ENCODE measurements at regions of chr1 and their contacts with region 1.

Region 1: DNA sequence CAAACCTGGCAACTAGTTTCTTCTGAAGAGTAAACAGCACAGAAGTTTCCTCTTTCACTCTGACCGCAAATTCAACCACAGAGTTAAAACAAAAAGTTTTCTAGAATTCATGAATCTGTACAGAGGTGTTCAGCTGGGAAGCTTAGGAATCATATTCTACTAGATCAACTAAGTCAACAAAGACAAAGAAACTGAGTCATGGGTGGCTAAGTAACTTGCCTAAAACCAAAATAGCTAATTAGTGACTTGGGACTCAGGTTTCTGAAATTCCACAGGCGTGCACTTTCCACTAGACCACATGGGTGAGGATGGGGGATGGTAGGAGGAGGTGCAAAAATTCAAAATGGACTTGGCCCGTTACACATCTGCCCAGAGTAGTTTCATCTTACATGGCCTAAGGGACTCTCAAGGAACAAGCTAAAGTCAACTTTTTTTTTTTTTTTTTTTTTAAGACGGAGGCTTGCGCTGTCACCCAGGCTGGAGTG is 25.8 kb downstream of the PTPN14 start:
- DNase-seq: peak; percentile 77 to 96
- H3K4me3 ChIP-seq: peak overlapping the region; percentile 4; the same call in 1 of the 2 replicates
- H3K27ac ChIP-seq: peak overlapping the region; percentile 43
- H3K4me1 ChIP-seq: peaks cover 37% of the 10 kb centered on the region
- H3K27me3 ChIP-seq: no peaks in the 10 kb centered on the region
- CTCF ChIP-seq: no peak

Region 2: DNA sequence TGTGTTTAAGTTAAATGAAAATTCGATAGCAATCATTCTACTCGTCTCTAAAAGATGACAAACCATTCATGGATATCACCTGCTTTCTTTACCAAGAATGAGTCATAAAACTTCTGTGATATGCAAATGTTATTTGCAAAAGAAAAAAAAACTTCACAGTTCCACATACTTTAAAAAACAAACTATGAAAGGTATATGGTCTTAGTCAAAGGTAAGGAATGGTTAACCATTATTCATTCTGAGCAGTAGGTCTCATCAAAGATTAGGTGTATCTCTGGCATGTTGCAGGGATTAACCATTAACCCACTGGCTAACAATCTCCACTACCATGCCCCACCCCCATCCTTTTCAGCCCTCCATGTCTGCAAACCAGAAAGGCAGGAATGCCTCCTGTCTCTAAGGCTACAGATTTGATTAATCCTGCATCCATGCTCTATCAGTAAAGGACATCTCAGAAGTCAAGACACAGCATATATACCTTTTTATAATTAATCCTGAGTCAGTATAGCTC is 18.6 kb before region 1 on chr1:
- CTCF ChIA-PET with region 1: no interaction called
- POLR2A ChIA-PET with region 1: no interaction called
- intact Hi-C with region 1: loop called (anchors 1 kb)
- DNase-seq: peak; percentile 75 to 97
- H3K4me3 ChIP-seq: peak overlapping the region; percentile 6; the same call in 1 of the 2 replicates
- H3K27ac ChIP-seq: peak overlapping the region; percentile 13; the same call in 1 of the 2 replicates
- H3K4me1 ChIP-seq: peaks cover 47% of the 10 kb centered on the region
- H3K27me3 ChIP-seq: no peaks in the 10 kb centered on the region
- CTCF ChIP-seq: no peak

Region 3: DNA sequence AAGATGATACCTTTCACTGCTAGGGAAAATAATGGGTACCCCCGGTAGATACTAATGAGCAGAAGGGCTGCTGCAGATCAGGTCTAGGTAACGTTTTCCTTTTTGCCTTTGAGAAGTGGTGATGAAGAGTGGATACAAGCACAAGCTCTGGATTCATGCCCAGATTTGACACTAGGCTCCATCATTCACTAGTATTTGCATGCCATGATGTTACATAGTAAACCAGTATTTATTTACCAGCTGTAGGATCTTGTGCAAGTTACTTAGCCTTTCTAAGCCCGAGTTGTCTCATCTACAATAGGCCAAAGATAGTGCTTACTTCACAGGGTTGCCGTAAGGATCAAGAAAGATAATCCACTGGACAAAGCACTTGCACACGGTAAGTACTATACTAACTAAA is 11.6 kb after region 1 on chr1:
- CTCF ChIA-PET with region 1: interaction called, 9 read pairs
- POLR2A ChIA-PET with region 1: interaction called, 17 read pairs
- intact Hi-C with region 1: no loop called
- DNase-seq: no peak
- H3K4me3 ChIP-seq: no peak overlapping the region
- H3K27ac ChIP-seq: no peak overlapping the region
- H3K4me1 ChIP-seq: no peaks in the 10 kb centered on the region
- H3K27me3 ChIP-seq: no peaks in the 10 kb centered on the region
- CTCF ChIP-seq: no peak

Measured in PC-9 (cell line).